ENCODE measurements at regions of chr7 and their contacts with region 1.

Region 1: DNA sequence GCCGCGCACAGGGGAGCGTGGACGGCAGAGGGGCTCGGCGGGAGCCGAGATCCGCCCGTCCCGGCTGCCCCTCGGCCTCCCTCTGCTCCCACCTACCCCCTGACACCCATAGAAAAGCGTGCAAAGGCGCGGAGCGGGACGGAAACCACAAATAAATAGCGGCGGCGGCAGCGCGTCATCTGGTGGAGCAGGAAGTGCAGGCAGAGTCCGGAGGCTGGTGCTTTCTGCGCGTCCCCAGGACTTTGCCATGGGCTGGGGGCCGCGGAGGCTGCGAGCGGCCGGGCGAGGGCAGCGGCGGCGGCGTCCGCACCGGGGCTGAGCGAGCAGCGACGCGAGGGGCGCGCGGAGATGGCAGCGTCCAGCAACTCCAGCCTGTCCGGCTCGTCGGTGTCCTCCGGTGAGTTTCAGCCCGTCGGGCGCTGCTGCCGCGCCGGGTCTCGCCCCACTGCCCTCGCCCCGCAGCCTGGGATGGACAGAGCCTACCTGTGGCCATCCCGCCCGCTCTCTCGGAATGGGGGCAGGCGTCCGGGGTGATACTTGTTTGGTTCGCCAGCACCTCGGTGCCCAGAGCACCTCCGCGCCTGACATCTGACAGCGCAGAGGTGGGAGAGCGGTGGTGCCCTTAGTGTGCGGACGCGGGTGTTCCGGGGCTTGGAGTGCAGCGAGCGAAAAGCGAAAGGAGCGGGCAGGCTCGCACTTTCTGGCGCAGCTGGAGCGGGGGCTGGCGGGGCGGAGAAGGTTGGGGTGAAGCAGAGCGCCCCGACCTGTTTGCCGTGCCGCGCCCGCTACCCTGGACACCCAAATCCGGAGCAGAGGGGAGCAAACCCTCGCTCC is at the start of gene CHN2:
- DNase-seq: peak; percentile 26 to 83 (median 60)
- ATAC-seq: peak; percentile 77
- H3K4me3 ChIP-seq: peak within 1 kb of the TSS; percentile 58 to 82
- H3K4me3 Mint-ChIP-seq: peak within 1 kb of the TSS; percentile 95
- H3K27ac ChIP-seq: peak within 1 kb of the TSS; percentile 14 to 54
- H3K27ac Mint-ChIP-seq: peak within 1 kb of the TSS; percentile 85
- H3K4me1 ChIP-seq: peaks cover 15% of the 10 kb centered on the region
- H3K4me1 Mint-ChIP-seq: peaks cover 33% of the 10 kb centered on the region
- H3K27me3 ChIP-seq: no peaks in the 10 kb centered on the region
- H3K27me3 Mint-ChIP-seq: no peaks in the 10 kb centered on the region
- CTCF ChIP-seq: no peak
- total RNA-seq, gene CHN2: 9.9 to 10.3 TPM

Region 2: GRCh38 chr7:29285444-29285793 is 90.6 kb after region 1 on chr7:
- CTCF ChIA-PET with region 1: interaction called, 9 read pairs
- POLR2A ChIA-PET with region 1: no interaction called
- intact Hi-C with region 1: loop called in 1 of 2 experiments (anchors 1 kb)
- DNase-seq: peak in 7 of 9 experiments; percentile 15 to 83 (median 34)
- ATAC-seq: peak; percentile 77
- H3K4me3 ChIP-seq: no peak overlapping the region
- H3K4me3 Mint-ChIP-seq: no peak overlapping the region
- H3K27ac ChIP-seq: no peak overlapping the region
- H3K27ac Mint-ChIP-seq: no peak overlapping the region
- H3K4me1 ChIP-seq: peaks cover 11% of the 10 kb centered on the region
- H3K4me1 Mint-ChIP-seq: peaks cover 30% of the 10 kb centered on the region
- H3K27me3 ChIP-seq: no peaks in the 10 kb centered on the region
- H3K27me3 Mint-ChIP-seq: no peaks in the 10 kb centered on the region
- CTCF ChIP-seq: no peak

Region 3: DNA sequence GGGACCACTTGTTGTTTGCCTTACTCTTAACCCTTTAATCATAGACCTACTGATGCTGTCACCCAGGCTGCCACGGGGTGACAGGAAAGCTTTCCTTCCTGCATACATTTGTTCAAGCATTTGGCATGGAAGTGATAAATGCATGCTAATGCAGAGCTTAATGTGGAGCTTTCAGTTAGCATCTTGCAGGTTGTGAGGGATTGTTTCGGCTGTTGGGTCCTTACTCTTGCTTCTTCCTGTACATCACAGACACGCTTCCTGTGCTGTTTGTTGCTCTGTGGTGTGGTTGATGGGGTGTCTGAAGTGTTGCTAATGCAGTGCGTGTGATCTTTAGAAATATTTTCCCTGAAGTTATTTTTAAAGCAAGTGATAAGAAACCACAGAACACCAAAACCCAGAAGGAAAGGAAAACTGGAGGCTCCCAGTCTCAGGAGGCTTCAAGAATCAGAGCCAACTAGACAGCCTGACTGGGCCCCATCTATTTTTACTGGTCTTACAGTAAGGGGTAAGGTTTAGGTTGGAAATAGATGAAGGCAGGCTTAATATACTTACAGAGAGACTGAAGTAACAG is 142.8 kb after region 1 on chr7:
- CTCF ChIA-PET with region 1: interaction called, 56 read pairs
- POLR2A ChIA-PET with region 1: interaction called, 14 read pairs
- intact Hi-C with region 1: loop called in 1 of 2 experiments (anchors 2 kb)
- DNase-seq: peak; percentile 19 to 87 (median 50)
- ATAC-seq: peak; percentile 91
- H3K4me3 ChIP-seq: peak overlapping the region in 1 of 2 experiments; percentile 16
- H3K4me3 Mint-ChIP-seq: peak overlapping the region; percentile 64
- H3K27ac ChIP-seq: peak overlapping the region; percentile 30 to 53
- H3K27ac Mint-ChIP-seq: peak overlapping the region; percentile 83
- H3K4me1 ChIP-seq: peaks cover 30% of the 10 kb centered on the region
- H3K4me1 Mint-ChIP-seq: peaks cover 49% of the 10 kb centered on the region
- H3K27me3 ChIP-seq: no peaks in the 10 kb centered on the region
- H3K27me3 Mint-ChIP-seq: no peaks in the 10 kb centered on the region
- CTCF ChIP-seq: no peak

Measured in CD8-positive, alpha-beta T cell (primary cell).